Mammary epithelial cell (primary cell): ENCODE measurements at regions of chr14 and their contacts with region 1.

Region 1: GRCh38 chr14:53295985-53296582 is 143.0 kb upstream of the DDHD1 start:
- DNase-seq: peak; percentile 19
- H3K4me3 ChIP-seq: no peak overlapping the region
- H3K27ac ChIP-seq: no peak overlapping the region
- H3K4me1 ChIP-seq: no peaks in the 10 kb centered on the region
- H3K27me3 ChIP-seq: no peaks in the 10 kb centered on the region
- CTCF ChIP-seq: peak; percentile 51

Region 2: DNA sequence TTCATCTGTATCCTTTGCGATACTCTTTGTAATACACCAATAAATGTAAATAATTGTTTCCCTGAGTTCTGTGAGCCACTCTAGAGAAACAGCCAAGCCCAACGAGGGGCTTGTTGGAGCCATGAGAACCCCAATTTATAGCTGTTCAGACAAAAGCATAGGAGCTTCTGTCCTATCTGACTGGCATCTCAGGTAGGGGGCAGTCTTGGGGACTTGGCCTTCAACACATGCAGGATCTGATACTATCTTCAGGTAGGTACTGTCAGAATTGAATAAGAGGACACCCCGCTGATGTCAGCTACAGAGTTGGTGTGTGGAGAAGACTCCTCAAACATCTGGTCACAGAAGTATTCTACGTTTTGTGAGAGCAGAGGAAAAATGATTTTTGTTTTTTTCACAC is 769.0 kb before region 1 on chr14:
- CTCF ChIA-PET with region 1: no interaction called
- dilution Hi-C with region 1: no loop called
- in situ Hi-C with region 1: no loop called
- intact Hi-C with region 1: no loop called
- DNase-seq: no peak
- H3K4me3 ChIP-seq: no peak overlapping the region
- H3K27ac ChIP-seq: no peak overlapping the region
- H3K4me1 ChIP-seq: no peaks in the 10 kb centered on the region
- H3K27me3 ChIP-seq: no peaks in the 10 kb centered on the region
- CTCF ChIP-seq: no peak

Region 3: GRCh38 chr14:52801015-52801712 is 494.9 kb before region 1 on chr14:
- CTCF ChIA-PET with region 1: no interaction called
- dilution Hi-C with region 1: no loop called
- in situ Hi-C with region 1: loop called (anchors 25 kb)
- intact Hi-C with region 1: no loop called
- DNase-seq: no peak
- H3K4me3 ChIP-seq: no peak overlapping the region
- H3K27ac ChIP-seq: no peak overlapping the region
- H3K4me1 ChIP-seq: no peaks in the 10 kb centered on the region
- H3K27me3 ChIP-seq: no peaks in the 10 kb centered on the region
- CTCF ChIP-seq: no peak

Region 4: DNA sequence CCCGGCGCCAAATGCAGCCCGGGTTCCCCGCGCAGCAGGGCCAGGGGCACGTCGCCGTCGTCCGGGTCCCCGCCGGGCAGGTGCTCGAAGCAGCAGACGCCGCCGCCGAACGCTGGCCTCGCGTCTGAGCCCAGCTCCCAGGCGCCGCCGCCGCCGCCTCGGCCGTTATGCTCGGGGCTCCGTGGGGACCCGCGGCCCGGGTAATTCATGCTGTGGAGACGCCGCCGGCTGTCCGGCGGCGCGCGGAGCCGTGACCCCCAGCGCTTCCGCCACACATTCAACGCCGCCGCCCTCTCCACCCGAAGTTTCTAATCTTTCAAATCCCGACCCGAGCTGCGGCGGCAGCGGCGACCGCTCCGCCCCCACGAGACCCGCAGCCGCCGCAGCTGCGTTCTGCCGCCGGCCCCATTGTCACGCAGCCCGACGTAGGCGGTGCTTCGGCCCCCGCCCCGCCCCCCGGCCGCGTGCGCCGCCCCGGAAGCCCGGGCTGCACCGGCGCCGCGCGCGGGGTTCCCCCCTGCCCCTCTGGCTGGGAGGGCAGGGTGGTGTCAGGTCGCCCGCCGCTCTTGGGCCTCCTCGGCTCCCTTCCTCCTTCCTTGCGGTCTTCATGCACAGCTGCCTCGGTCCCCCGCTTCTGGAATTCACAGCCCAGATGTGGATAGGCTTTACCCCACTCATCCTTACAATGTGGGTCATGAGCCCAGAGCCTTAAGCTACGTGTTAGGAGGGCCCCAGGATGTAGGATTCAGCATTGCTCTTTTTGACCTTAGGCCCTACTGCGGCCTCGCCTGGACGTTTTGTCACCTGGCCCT is 143.0 kb before region 1 on chr14 and contains the start of gene DDHD1:
- CTCF ChIA-PET with region 1: no interaction called
- dilution Hi-C with region 1: no loop called
- in situ Hi-C with region 1: no loop called
- intact Hi-C with region 1: loop called (anchors 10 kb)
- DNase-seq: peak; percentile 57
- H3K4me3 ChIP-seq: peak within 1 kb of the TSS; percentile 74 to 91 (median 82)
- H3K27ac ChIP-seq: peak within 1 kb of the TSS; percentile 41
- H3K4me1 ChIP-seq: peaks cover 12% of the 10 kb centered on the region
- H3K27me3 ChIP-seq: no peaks in the 10 kb centered on the region
- CTCF ChIP-seq: no peak
- total RNA-seq, gene DDHD1: 18.0 to 27.3 TPM

Region 5: GRCh38 chr14:53217295-53217994 is 78.6 kb before region 1 on chr14:
- CTCF ChIA-PET with region 1: no interaction called
- dilution Hi-C with region 1: no loop called
- in situ Hi-C with region 1: no loop called
- intact Hi-C with region 1: no loop called
- DNase-seq: peak; percentile 60
- H3K4me3 ChIP-seq: peak overlapping the region; percentile 56 to 70 (median 64)
- H3K27ac ChIP-seq: no peak overlapping the region
- H3K4me1 ChIP-seq: peaks cover 3% of the 10 kb centered on the region
- H3K27me3 ChIP-seq: no peaks in the 10 kb centered on the region
- CTCF ChIP-seq: peak; percentile 10 to 62

Region 6: GRCh38 chr14:53325176-53325806 is 29.2 kb after region 1 on chr14:
- CTCF ChIA-PET with region 1: no interaction called
- dilution Hi-C with region 1: no loop called
- in situ Hi-C with region 1: no loop called
- intact Hi-C with region 1: loop called (anchors 2 kb)
- DNase-seq: peak; percentile 29
- H3K4me3 ChIP-seq: no peak overlapping the region
- H3K27ac ChIP-seq: no peak overlapping the region
- H3K4me1 ChIP-seq: peaks cover 19% of the 10 kb centered on the region
- H3K27me3 ChIP-seq: no peaks in the 10 kb centered on the region
- CTCF ChIP-seq: peak in 1 of 2 donors; percentile 34

Region 7: GRCh38 chr14:53399057-53399456 is 103.0 kb after region 1 on chr14:
- CTCF ChIA-PET with region 1: no interaction called
- dilution Hi-C with region 1: no loop called
- in situ Hi-C with region 1: no loop called
- intact Hi-C with region 1: loop called (anchors 2 kb)
- DNase-seq: no peak
- H3K4me3 ChIP-seq: no peak overlapping the region
- H3K27ac ChIP-seq: no peak overlapping the region
- H3K4me1 ChIP-seq: no peaks in the 10 kb centered on the region
- H3K27me3 ChIP-seq: no peaks in the 10 kb centered on the region
- CTCF ChIP-seq: peak; percentile 39 to 42

Region 8: DNA sequence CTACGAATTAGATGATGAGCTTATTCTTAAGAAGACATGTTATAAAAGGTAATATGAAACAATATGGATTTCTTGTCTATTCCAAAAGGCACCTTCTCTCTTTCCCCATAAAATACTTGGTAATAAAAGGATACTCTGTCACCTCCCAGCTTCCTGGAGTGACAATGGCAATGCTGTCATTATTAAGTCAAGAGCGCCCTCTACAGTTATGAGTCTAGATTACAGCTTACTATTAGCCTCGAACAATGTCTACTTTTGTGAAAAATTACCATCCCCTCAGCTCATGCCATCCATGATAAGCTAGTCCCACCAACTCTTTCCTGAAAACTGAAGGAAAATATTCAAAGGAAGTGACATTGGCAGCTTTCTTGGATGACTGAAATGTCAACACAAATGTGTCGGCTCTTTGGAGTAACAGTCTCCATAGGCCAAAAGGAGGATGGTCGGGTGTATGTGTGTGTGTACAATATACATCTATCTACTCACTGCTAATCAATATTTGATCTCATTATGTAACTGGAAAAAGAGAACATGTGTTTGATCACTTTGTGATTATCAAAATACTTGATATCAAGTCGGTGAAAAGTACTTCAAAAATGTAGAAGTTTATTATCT is 1052.0 kb after region 1 on chr14:
- CTCF ChIA-PET with region 1: no interaction called
- dilution Hi-C with region 1: no loop called
- in situ Hi-C with region 1: no loop called
- intact Hi-C with region 1: loop called (anchors 2 kb)
- DNase-seq: peak; percentile 29
- H3K4me3 ChIP-seq: no peak overlapping the region
- H3K27ac ChIP-seq: no peak overlapping the region
- H3K4me1 ChIP-seq: no peaks in the 10 kb centered on the region
- H3K27me3 ChIP-seq: no peaks in the 10 kb centered on the region
- CTCF ChIP-seq: peak; percentile 73 to 82